A673 (cell line): ENCODE measurements at regions of chr6 and their contacts with region 1.

Region 1: GRCh38 chr6:142155895-142156757 is 9.1 kb downstream of the VTA1 start:
- DNase-seq: peak; percentile 47
- H3K4me3 ChIP-seq: no peak overlapping the region
- H3K27ac ChIP-seq: peak overlapping the region; percentile 17
- H3K4me1 ChIP-seq: peaks cover 9% of the 10 kb centered on the region
- H3K27me3 ChIP-seq: no peaks in the 10 kb centered on the region
- CTCF ChIP-seq: peak; percentile 67

Region 2: GRCh38 chr6:141890661-141891060 is 265.5 kb before region 1 on chr6:
- CTCF ChIA-PET with region 1: no interaction called
- POLR2A ChIA-PET with region 1: no interaction called
- intact Hi-C with region 1: no loop called
- DNase-seq: no peak
- H3K4me3 ChIP-seq: no peak overlapping the region
- H3K27ac ChIP-seq: no peak overlapping the region
- H3K4me1 ChIP-seq: no peaks in the 10 kb centered on the region
- H3K27me3 ChIP-seq: no peaks in the 10 kb centered on the region
- CTCF ChIP-seq: no peak

Region 3: GRCh38 chr6:142500250-142500786 is 344.2 kb after region 1 on chr6:
- CTCF ChIA-PET with region 1: no interaction called
- POLR2A ChIA-PET with region 1: no interaction called
- intact Hi-C with region 1: no loop called
- DNase-seq: no peak
- H3K4me3 ChIP-seq: no peak overlapping the region
- H3K27ac ChIP-seq: no peak overlapping the region
- H3K4me1 ChIP-seq: no peaks in the 10 kb centered on the region
- H3K27me3 ChIP-seq: no peaks in the 10 kb centered on the region
- CTCF ChIP-seq: no peak

Region 4: DNA sequence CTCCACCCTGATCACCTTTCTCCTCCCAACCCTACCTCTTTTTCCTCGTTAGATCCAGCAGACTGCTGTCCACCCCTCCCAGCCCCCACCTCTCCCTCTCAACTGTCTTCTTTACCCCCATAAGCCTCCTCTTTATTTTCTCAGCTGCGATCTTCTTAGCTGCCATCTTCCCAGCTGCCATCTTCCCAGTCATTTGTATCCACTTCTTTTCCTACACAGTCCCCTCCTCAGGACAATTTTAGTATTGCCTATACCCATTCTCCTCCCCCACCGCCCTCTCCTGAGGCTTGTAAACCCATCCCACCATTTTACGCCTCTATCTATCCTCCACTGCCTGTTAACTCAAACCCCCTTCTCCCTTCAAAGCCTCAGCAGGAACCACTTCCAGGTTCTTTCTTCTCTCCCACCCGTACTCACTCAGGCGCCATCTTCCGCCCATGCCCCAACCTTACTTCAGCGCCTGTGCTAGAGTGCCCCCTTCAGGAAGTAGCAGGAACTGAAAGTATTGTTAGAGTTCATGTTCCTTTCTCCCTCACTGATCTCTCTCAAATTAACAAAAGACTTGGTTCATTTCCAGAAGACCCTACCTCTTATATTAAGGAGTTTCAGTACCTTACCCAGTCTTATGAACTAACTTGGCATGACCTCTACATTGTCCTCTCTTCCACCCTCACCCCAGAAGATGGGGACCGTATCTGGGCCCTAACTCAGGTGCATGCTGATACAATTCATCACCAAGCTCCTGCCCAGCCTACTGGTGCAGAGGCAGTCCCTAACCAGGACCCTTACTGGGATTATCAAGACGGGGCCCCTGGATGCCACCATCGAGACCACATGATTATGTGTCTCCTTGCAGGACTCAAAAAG is 381.7 kb after region 1 on chr6:
- CTCF ChIA-PET with region 1: no interaction called
- POLR2A ChIA-PET with region 1: no interaction called
- intact Hi-C with region 1: loop called (anchors 5 kb)
- DNase-seq: peak; percentile 73
- H3K4me3 ChIP-seq: no peak overlapping the region
- H3K27ac ChIP-seq: no peak overlapping the region
- H3K4me1 ChIP-seq: no peaks in the 10 kb centered on the region
- H3K27me3 ChIP-seq: no peaks in the 10 kb centered on the region
- CTCF ChIP-seq: peak; percentile 74